ENCODE measurements at regions of chr5 and their contacts with region 1.

Region 1: DNA sequence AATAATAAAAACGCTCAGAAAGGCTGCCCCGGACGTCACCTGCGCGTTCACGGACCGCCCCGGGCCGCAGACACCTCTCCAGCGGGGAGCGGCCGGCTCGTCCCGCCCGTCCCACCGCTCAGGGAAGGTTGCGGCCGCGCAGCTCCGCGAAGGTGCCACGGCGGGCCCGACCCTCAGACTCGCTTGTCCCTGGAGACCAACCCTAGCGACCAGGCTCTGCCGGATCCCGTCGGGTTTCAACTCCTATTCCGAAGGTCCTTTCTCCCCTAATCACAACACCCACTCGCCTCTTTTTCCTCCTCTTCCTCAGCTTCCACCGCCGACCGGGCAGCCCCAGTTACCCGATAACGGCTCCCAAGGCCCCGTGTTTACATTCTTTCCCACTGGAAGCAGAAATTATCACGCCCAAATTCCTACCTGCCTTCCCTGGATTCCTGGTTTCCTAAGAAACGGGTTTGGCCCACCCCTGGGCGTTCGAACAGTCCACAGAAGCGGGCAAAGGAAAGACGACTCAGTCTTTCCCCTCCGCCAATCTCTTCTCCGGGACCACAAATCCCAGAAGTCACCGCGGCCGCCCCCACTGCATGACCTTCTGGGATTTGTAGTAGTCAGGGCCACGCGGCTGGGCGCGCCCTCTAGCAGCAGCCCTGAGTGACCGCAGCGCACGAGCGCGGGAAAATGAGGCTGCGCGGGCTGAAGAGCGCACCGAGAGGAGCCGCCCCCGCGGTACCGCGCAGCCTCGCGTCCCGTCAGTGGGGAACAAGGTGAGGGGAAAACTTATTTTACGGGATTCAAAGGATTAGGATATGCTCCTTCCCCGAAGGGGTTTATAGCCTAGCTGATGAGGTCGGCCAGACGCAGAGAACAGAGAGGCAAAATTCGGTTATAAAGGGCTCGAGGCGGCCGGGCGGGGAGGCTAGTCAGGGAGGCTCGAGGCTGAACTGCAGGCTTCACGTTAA is at the start of gene TTC33:
- DNase-seq: peak; percentile 98
- H3K4me3 Mint-ChIP-seq: no peak within 1 kb of the TSS
- H3K27ac Mint-ChIP-seq: no peak within 1 kb of the TSS
- H3K4me1 Mint-ChIP-seq: peaks cover 15% of the 10 kb centered on the region
- H3K27me3 Mint-ChIP-seq: no peaks in the 10 kb centered on the region
- total RNA-seq, gene TTC33: 22.7 and 23.1 TPM in 2 replicates

Region 2: DNA sequence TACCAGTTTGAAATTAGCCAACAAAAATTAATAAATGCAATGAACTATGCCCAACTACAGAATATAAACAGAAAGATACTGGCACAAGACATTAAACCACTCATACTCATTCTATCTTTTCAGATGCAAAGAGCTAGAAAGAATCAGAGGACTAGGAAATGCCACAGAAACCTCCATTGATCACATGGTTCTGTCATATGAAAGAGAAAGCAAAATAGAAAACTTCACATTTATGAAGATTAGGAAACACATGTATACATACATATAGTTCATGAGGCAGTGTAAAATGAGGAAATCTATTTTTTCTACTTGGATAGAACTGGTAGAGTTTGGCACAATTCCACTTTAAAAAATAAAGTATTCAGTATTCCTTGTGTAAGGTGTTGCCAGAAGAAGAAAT is 351.1 kb before region 1 on chr5:
- intact Hi-C with region 1: loop called (anchors 10 kb)
- DNase-seq: peak; percentile 80
- H3K4me3 Mint-ChIP-seq: peak overlapping the region; percentile 21
- H3K27ac Mint-ChIP-seq: peak overlapping the region; percentile 75
- H3K4me1 Mint-ChIP-seq: peaks cover 71% of the 10 kb centered on the region
- H3K27me3 Mint-ChIP-seq: no peaks in the 10 kb centered on the region

Region 3: GRCh38 chr5:40736103-40736875 is 19.4 kb before region 1 on chr5:
- intact Hi-C with region 1: loop called (anchors 2 kb)
- DNase-seq: peak; percentile 77
- H3K4me3 Mint-ChIP-seq: no peak overlapping the region
- H3K27ac Mint-ChIP-seq: peak overlapping the region; percentile 12
- H3K4me1 Mint-ChIP-seq: peaks cover 18% of the 10 kb centered on the region
- H3K27me3 Mint-ChIP-seq: no peaks in the 10 kb centered on the region

Region 4: DNA sequence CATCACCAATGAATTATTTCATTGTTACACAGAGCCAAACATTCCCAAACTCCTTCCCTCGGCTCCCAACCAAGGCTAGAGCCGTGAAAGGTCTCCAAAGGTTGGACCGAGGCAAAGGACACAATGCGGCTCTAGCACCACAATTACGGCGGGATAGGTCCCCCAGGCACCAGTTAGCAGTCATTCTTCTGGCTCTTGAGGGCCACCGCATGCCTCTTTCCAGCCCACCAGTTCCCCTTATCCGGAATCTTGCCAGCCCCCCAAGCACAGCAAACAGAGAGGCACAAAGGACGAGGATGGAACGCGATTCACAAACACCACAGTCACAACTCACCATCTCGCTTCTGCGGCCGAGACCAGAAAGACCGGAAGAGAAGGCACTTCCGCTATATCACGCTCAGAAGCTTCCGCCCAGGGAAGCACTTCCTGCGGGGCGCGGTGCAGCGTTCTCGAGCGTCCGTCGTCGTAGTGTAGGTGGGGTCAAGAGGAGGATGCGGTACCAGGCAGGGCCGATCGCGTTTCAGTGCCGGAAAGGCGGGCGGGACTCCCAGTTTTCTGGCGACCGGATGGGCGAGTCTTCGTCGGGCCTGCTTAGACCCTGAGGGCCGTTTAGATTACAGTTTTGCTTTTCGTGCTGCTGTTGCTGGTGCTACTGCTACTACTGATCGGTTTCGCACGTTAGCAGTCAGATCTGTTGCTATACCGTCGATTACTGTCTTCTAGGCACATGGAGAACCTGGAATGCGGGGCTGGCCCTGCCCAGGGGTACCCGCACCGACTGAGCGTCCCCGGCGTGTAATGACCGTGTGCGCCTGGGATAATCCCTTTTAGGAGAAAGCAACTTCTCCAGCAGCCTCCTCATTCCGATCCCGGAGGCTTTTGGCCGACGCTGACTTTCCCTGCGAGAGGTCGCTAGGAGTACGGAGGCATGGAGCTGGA is 79.4 kb after region 1 on chr5 and contains the start of gene RPL37:
- intact Hi-C with region 1: loop called (anchors 1 kb)
- DNase-seq: peak; percentile 97
- H3K4me3 Mint-ChIP-seq: peak within 1 kb of the TSS; percentile 97
- H3K27ac Mint-ChIP-seq: peak within 1 kb of the TSS; percentile 99
- H3K4me1 Mint-ChIP-seq: peaks cover 43% of the 10 kb centered on the region
- H3K27me3 Mint-ChIP-seq: no peaks in the 10 kb centered on the region
- total RNA-seq, gene RPL37: 1,546 and 1,565 TPM in 2 replicates

Region 5: DNA sequence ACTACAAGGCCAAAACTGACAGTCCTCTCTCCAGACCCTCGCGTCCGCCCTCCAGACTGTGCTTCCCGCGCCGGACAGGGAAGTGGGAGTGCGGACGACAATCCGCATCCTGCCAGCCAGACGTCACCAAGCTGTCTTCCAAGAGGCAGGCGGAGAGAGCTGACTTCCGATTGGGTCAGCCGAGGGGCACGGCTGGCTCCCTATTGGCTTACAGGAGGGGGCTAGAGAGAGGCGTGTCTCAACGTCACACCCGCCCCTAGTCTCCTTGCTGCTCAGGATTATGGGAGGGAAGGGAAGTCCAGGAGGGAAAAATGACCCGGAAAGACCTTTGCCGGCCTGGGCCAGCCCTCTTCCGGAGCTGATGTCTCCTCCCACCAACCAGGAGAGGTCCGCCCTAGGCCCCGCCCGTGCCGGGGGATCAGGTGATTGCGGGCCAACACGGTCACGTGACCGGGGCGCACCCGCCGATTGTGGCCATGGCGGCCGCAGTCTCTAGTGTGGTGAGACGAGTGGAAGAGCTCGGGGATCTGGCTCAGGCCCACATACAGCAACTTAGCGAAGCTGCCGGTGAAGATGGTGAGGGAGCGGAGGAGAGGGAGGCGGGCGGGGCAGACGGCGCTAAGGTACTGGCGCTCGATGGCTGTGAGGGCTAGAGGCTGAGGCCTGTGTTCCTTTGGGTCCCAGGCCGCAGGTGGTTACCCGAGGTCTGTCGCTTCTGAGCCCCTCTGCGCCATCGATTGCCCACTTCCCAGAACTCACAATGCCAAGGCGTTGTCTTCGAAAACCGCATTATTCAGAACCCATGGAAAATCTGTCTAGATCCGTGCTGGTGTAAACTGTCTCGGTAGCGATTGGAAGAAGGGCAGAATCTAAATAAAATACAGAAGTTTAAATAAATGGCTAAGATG is 1148.5 kb after region 1 on chr5 and contains the start of gene RIMOC1:
- intact Hi-C with region 1: loop called (anchors 10 kb)
- DNase-seq: peak; percentile 100
- H3K4me3 Mint-ChIP-seq: peak within 1 kb of the TSS; percentile 92
- H3K27ac Mint-ChIP-seq: peak within 1 kb of the TSS; percentile 96
- H3K4me1 Mint-ChIP-seq: peaks cover 43% of the 10 kb centered on the region
- H3K27me3 Mint-ChIP-seq: peaks cover 9% of the 10 kb centered on the region
- total RNA-seq, gene RIMOC1: 29.6 and 31.7 TPM in 2 replicates

Measured in activated CD4-positive, alpha-beta T cell treated with anti-CD3 and anti-CD28 coated beads, Interleukin-2, amount 10 ng/mL, durations not matched to agents 24 days and 14 days (primary cell).